ENCODE measurements at regions of chr12 and their contacts with region 1.

Region 1: GRCh38 chr12:27034607-27035293 is 12.4 kb downstream of the MED21 start:
- DNase-seq: no peak
- H3K4me3 ChIP-seq: no peak overlapping the region
- CTCF ChIP-seq: no peak

Region 2: GRCh38 chr12:27024291-27024690 is 10.5 kb before region 1 on chr12:
- CTCF ChIA-PET with region 1: interaction called, 16 read pairs
- POLR2A ChIA-PET with region 1: interaction called, 3 read pairs
- DNase-seq: no peak
- H3K4me3 ChIP-seq: no peak overlapping the region
- CTCF ChIP-seq: no peak

Region 3: DNA sequence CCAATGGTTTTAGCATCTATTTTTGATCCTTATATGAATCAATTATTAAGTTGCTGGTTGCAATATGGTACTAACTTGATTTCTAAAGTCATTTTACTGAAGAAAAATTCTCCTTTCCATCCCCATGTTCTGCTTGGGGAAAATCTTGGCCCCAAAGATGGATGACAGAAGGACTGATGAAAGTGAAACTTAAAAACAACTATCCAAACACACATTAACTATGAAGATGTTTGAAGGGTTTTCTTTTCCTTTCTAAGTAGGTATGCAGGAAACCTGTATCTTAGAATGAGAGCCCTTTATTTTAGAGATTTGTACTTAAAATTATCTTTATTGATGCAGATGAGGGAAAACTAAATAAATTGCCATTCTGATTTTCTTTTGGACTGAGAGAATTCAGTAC is 41.7 kb after region 1 on chr12:
- CTCF ChIA-PET with region 1: no interaction called
- POLR2A ChIA-PET with region 1: no interaction called
- DNase-seq: no peak
- H3K4me3 ChIP-seq: no peak overlapping the region
- CTCF ChIP-seq: no peak

Region 4: DNA sequence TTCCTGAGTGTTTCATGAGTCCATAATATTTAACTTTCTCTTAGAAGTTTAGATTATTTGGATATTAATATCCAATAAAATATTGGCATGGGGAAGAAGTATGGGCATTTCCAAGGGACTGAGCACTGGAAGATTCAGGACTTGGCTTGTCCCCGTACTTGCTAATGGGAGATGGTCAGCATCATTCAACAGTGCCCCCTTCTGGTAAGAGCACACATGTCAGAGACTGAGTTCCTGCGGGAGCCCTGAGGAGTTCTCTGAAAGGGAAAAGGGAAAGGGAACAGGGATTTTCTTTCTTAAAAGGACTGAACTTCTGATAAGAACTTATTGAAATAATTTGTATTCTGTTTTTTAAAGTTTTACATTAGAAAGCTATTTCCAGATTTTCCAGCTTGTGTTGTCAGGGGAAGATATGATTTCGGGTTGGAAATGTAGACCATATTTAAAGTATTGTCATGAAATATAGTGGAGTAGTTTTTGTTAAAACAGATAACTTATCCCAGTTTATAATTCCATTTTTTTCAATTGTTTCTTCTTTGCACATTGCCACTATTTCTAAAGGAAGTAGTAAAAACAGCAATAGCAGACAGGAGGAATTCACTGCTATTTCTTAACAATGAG is 107.5 kb after region 1 on chr12:
- CTCF ChIA-PET with region 1: interaction called, 16 read pairs
- POLR2A ChIA-PET with region 1: no interaction called
- DNase-seq: peak; percentile 28
- H3K4me3 ChIP-seq: no peak overlapping the region
- CTCF ChIP-seq: peak; percentile 86